ENCODE measurements at regions of chr1 and their contacts with region 1.

Region 1: DNA sequence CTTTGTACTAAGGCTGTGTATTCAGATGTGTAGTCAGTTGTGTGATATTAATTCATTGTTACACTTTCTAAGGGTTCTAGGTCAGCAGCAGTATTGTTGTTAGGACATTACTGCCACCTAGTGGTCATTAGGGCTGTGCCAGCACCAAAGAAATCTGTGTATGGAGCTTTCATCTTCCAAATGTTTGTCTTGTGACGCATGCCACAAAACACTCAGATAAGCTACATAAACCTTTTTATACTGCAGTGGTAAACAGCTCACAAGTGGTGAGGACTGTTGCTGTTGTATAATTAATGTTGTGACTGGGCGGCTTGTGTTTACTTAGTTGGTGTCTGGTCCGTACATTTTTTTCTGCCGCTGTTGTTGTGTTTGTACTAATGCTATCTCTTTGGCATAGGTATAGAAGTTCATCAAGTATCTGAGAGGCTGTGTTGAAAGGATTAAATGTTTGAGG is 51.7 kb downstream of the S1PR1 start:
- DNase-seq: peak in 8 of 9 donors; percentile 48 to 83 (median 78)
- ATAC-seq: peak; percentile 83
- H3K4me3 ChIP-seq: no peak overlapping the region
- H3K4me3 Mint-ChIP-seq: peak overlapping the region in 6 of 10 donors; percentile 4 to 47 (median 20)
- H3K27ac ChIP-seq: peak overlapping the region; percentile 20
- H3K27ac Mint-ChIP-seq: peak overlapping the region; percentile 63 to 93 (median 80)
- H3K4me1 ChIP-seq: peaks cover 66 to 68% of the 10 kb centered on the region in 2 donors
- H3K4me1 Mint-ChIP-seq: peaks cover 55 to 82% (median 73%) of the 10 kb centered on the region in 7 donors
- H3K27me3 ChIP-seq: no peaks in the 10 kb centered on the region
- H3K27me3 Mint-ChIP-seq: no peaks in the 10 kb centered on the region

Region 2: GRCh38 chr1:100921109-100921706 is 367.3 kb before region 1 on chr1:
- CTCF ChIA-PET with region 1: interaction called, 88 read pairs
- POLR2A ChIA-PET with region 1: interaction called, 47 read pairs
- intact Hi-C with region 1: loop called (anchors 1 kb)
- DNase-seq: peak in 6 of 9 donors; percentile 35 to 62 (median 50)
- ATAC-seq: peak; percentile 77
- H3K4me3 ChIP-seq: no peak overlapping the region
- H3K4me3 Mint-ChIP-seq: peak overlapping the region in 1 of 10 donors; percentile 6
- H3K27ac ChIP-seq: peak overlapping the region; percentile 38
- H3K27ac Mint-ChIP-seq: peak overlapping the region in 8 of 9 donors; percentile 28 to 92 (median 88)
- H3K4me1 ChIP-seq: peaks cover 27 to 37% of the 10 kb centered on the region in 2 donors
- H3K4me1 Mint-ChIP-seq: peaks cover 13 to 62% (median 43%) of the 10 kb centered on the region in 7 donors
- H3K27me3 ChIP-seq: no peaks in the 10 kb centered on the region
- H3K27me3 Mint-ChIP-seq: no peaks in the 10 kb centered on the region

Region 3: DNA sequence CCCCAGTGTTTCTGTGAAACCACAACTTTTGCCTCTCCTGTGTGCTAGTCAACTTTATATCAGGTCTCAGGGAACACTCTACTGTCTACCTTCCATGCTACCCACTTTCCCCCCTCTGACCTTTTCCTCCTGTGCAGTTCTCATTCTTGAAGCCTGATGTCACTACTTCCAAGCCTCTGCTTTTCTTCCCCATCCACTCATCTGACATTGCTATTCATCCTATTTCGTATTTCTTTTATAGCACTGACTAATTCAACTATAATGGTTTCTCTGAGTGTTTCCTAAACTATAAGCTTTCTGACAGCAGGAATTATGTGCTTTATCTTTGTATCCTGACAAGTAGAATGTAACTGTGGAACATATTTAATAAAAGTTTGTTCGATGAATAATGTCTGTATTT is 244.7 kb before region 1 on chr1:
- CTCF ChIA-PET with region 1: interaction called, 3 read pairs
- POLR2A ChIA-PET with region 1: no interaction called
- intact Hi-C with region 1: loop called in 1 of 2 experiments (anchors 1 kb)
- DNase-seq: no peak
- ATAC-seq: no peak
- H3K4me3 ChIP-seq: no peak overlapping the region
- H3K4me3 Mint-ChIP-seq: no peak overlapping the region
- H3K27ac ChIP-seq: no peak overlapping the region
- H3K27ac Mint-ChIP-seq: no peak overlapping the region
- H3K4me1 ChIP-seq: no peaks in the 10 kb centered on the region
- H3K4me1 Mint-ChIP-seq: peaks cover 2 to 15% (median 13%) of the 10 kb centered on the region in 7 donors
- H3K27me3 ChIP-seq: no peaks in the 10 kb centered on the region
- H3K27me3 Mint-ChIP-seq: no peaks in the 10 kb centered on the region

Region 4: DNA sequence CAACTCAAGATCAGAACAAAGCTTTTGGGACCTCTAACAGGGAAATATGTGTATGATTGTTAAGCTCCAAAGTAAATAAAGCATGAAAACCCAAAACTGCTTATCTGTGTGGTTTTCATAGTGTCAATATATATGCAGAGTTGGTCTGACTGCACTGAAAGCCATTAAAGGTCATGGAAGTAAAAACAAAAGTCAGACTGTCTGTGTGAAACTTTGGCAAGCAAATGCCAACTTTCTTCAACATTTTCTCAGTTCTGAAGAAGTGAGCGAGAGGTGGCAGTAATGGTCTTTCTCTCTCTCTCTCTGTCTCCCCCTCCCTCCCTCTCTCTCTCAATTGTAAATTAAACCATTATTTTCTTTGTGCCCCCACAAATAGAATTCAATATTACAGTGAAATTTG is 151.8 kb before region 1 on chr1:
- CTCF ChIA-PET with region 1: interaction called, 65 read pairs
- POLR2A ChIA-PET with region 1: interaction called, 14 read pairs
- intact Hi-C with region 1: loop called (anchors 1 kb)
- DNase-seq: peak in 7 of 9 donors; percentile 11 to 59 (median 45)
- ATAC-seq: peak; percentile 77
- H3K4me3 ChIP-seq: no peak overlapping the region
- H3K4me3 Mint-ChIP-seq: peak overlapping the region in 9 of 10 donors; percentile 23 to 62 (median 49)
- H3K27ac ChIP-seq: peak overlapping the region; percentile 19
- H3K27ac Mint-ChIP-seq: peak overlapping the region; percentile 67 to 93 (median 85)
- H3K4me1 ChIP-seq: peaks cover 17 to 32% of the 10 kb centered on the region in 2 donors
- H3K4me1 Mint-ChIP-seq: peaks cover 37 to 67% (median 66%) of the 10 kb centered on the region in 7 donors
- H3K27me3 ChIP-seq: no peaks in the 10 kb centered on the region
- H3K27me3 Mint-ChIP-seq: no peaks in the 10 kb centered on the region

Region 5: DNA sequence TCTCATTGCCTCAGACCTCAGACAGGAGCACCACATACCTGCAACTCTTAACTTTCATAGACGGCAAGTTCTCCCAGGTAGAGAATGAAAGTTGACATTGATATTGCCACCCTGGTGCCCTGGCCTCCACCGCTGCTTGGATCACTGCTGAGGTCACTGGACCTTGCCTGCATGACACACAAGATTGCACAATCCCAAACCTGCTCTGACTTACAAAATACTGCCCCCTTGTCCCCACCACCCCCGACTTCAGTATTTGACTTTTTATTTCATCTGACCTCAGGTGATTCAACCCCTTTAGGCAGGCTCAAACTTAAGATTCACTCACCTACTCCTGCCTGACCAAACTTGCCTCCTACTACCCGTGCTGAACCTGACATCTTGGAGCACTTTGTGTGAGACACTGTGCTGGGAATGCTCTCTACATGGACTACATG is 94.8 kb before region 1 on chr1:
- CTCF ChIA-PET with region 1: no interaction called
- POLR2A ChIA-PET with region 1: no interaction called
- intact Hi-C with region 1: no loop called
- DNase-seq: no peak
- ATAC-seq: peak; percentile 46
- H3K4me3 ChIP-seq: no peak overlapping the region
- H3K4me3 Mint-ChIP-seq: no peak overlapping the region
- H3K27ac ChIP-seq: no peak overlapping the region
- H3K27ac Mint-ChIP-seq: no peak overlapping the region
- H3K4me1 ChIP-seq: no peaks in the 10 kb centered on the region
- H3K4me1 Mint-ChIP-seq: peaks cover 0 to 18% (median under 1%) of the 10 kb centered on the region in 7 donors
- H3K27me3 ChIP-seq: no peaks in the 10 kb centered on the region
- H3K27me3 Mint-ChIP-seq: no peaks in the 10 kb centered on the region

Region 6: DNA sequence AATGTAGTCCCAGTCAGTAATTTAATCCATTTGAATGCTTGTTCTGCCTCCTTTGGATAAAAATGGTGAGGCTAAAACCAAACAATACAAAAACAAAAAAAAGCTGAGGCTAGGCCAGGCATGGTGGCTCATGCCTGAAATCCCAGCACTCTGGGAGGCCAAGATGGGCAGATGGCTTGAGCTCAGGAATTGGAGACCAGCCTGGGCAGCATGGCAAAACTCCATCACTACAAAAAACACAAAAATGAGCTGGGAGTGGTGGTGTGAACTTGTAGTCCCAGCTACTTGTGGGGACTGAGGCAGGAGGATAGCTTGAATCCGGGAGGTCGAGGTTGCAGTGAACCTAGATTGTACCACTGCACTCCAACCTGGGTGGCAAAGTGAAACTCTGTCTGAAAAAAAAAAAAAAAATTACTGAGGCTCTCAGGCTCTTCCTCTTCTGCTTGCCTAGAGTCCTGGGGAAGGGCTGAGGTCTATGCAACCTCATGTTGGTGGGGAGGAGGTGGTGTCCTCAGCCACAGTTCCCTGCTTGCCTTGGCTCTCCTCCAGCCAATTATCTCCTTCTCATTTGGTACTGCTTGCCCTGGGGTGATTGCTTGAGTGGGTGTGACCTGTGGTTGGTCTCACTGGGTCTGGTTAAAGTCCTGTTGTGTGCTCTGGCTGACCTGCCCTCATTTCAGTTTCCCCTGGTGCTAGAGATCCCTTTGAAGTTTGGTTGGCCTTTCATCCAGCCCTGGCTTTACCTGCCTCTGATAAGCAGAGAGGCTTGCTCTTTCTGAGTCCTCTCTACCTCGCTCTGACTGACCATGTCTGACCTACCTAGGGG is 30.8 kb before region 1 on chr1:
- CTCF ChIA-PET with region 1: interaction called, 42 read pairs
- POLR2A ChIA-PET with region 1: interaction called, 633 read pairs
- intact Hi-C with region 1: no loop called
- DNase-seq: peak in 2 of 9 donors; percentile 7 to 42
- ATAC-seq: peak; percentile 87
- H3K4me3 ChIP-seq: no peak overlapping the region
- H3K4me3 Mint-ChIP-seq: peak overlapping the region in 9 of 10 donors; percentile 34 to 77 (median 60)
- H3K27ac ChIP-seq: peak overlapping the region; percentile 53
- H3K27ac Mint-ChIP-seq: peak overlapping the region; percentile 26 to 92 (median 83)
- H3K4me1 ChIP-seq: peaks cover 49 to 54% of the 10 kb centered on the region in 2 donors
- H3K4me1 Mint-ChIP-seq: peaks cover 43 to 76% (median 67%) of the 10 kb centered on the region in 7 donors
- H3K27me3 ChIP-seq: no peaks in the 10 kb centered on the region
- H3K27me3 Mint-ChIP-seq: no peaks in the 10 kb centered on the region

Region 7: GRCh38 chr1:101379950-101380349 is 91.4 kb after region 1 on chr1:
- CTCF ChIA-PET with region 1: no interaction called
- POLR2A ChIA-PET with region 1: no interaction called
- intact Hi-C with region 1: no loop called
- DNase-seq: no peak
- ATAC-seq: no peak
- H3K4me3 ChIP-seq: no peak overlapping the region
- H3K4me3 Mint-ChIP-seq: peak overlapping the region in 2 of 10 donors; percentile 2 to 55
- H3K27ac ChIP-seq: no peak overlapping the region
- H3K27ac Mint-ChIP-seq: peak overlapping the region in 4 of 9 donors; percentile 3 to 44 (median 29)
- H3K4me1 ChIP-seq: peaks cover 0 to 4% of the 10 kb centered on the region in 2 donors
- H3K4me1 Mint-ChIP-seq: peaks cover 4 to 20% (median 6%) of the 10 kb centered on the region in 7 donors
- H3K27me3 ChIP-seq: no peaks in the 10 kb centered on the region
- H3K27me3 Mint-ChIP-seq: peaks cover 0 to 11% (median 0%) of the 10 kb centered on the region in 5 donors

Measured in naive thymus-derived CD4-positive, alpha-beta T cell (primary cell).